ENCODE measurements at regions of chr2 and their contacts with region 1.

Region 1: DNA sequence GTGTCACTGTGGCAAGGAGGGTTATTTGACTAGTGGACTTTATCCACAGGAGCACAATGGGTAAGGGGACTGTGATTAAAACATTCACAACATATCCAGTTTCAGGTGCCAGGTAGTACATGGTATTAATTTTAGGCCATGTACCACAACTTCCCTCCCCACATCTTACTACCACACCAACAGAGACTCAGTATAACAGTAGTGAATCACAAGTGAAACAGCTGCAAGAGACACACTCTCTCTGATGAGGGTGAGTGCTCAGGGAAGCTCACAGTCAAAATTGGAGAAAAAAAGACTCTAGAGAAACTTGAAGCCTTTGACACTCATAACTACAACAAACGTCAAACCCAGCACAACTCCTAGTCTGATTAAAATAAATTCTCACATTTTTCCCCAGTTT is 367.6 kb upstream of the GYPC start:
- DNase-seq: no peak
- H3K4me3 ChIP-seq: no peak overlapping the region
- H3K27ac ChIP-seq: no peak overlapping the region
- H3K4me1 ChIP-seq: no peaks in the 10 kb centered on the region
- H3K27me3 ChIP-seq: no peaks in the 10 kb centered on the region; the same call in 1 of the 2 replicates
- CTCF ChIP-seq: no peak

Region 2: DNA sequence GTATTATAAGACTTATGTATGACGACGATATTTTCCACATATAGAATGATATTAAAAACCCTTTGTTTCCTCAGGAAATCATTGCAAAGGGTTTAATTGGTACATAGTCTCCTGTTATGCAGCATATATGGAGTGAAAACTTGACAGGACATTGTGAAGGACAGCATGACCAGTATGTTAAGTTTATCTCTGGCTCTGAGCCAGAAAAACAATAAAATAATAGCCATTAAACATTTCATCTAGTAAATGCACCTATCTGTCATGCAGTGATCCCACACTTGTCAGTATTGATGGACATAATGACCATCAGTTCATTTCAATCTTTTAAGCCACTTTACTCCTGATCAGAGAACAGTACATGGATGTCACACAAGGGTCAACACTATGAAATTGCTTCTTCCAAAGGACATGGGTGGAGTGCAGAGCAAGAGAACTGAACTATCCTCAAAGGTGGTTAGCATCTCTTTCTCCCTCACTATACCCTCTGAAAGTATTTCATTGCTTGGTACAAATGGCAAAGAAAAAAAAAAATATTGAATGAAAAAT is 448.5 kb before region 1 on chr2:
- CTCF ChIA-PET with region 1: no interaction called
- POLR2A ChIA-PET with region 1: interaction called, 16 read pairs
- intact Hi-C with region 1: no loop called
- DNase-seq: no peak
- H3K4me3 ChIP-seq: no peak overlapping the region
- H3K27ac ChIP-seq: no peak overlapping the region
- H3K4me1 ChIP-seq: no peaks in the 10 kb centered on the region
- H3K27me3 ChIP-seq: no peaks in the 10 kb centered on the region
- CTCF ChIP-seq: no peak

Measured in PC-9 (cell line).